Activated CD8-positive, alpha-beta T cell treated with anti-CD3 and anti-CD28 coated beads for 36 hours (primary cell): ENCODE measurements at regions of chr12 and their contacts with region 1.

Region 1: DNA sequence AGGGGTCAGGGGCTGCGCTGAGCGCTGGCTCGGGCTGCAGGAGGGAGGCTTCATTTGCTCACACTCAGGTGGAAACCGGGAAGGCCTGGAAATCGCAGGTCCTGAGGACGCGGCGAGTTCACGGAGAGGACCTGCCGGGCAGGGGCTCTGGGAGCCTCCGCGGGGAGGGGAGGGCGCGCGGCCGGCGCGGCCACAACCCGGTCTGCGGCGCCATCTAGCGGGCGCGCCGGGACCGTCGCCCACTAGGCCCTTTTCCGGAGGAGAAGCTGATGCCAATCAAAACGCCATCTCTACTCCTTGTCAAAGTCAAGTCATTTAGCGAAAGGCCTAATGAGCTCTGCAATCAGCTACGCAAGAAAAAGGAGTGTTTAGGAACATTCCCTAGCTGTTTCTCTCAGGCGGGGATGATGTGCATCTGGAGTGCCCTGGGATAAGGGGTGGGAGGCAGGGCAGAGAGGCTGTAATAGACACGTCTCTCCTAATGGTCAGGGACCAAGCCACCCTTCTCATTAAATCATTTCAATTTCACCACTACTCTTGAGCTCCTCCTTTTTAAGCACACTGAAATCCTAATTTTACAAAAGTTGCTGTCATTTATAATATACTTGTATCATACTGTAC is 885.8 kb upstream of the TMEM132C start:
- DNase-seq: peak; percentile 38
- ATAC-seq: peak; percentile 62
- H3K4me3 Mint-ChIP-seq: no peak overlapping the region
- H3K27ac Mint-ChIP-seq: no peak overlapping the region
- H3K4me1 Mint-ChIP-seq: no peaks in the 10 kb centered on the region
- H3K27me3 Mint-ChIP-seq: no peaks in the 10 kb centered on the region
- CTCF ChIP-seq: peak; percentile 73

Region 2: DNA sequence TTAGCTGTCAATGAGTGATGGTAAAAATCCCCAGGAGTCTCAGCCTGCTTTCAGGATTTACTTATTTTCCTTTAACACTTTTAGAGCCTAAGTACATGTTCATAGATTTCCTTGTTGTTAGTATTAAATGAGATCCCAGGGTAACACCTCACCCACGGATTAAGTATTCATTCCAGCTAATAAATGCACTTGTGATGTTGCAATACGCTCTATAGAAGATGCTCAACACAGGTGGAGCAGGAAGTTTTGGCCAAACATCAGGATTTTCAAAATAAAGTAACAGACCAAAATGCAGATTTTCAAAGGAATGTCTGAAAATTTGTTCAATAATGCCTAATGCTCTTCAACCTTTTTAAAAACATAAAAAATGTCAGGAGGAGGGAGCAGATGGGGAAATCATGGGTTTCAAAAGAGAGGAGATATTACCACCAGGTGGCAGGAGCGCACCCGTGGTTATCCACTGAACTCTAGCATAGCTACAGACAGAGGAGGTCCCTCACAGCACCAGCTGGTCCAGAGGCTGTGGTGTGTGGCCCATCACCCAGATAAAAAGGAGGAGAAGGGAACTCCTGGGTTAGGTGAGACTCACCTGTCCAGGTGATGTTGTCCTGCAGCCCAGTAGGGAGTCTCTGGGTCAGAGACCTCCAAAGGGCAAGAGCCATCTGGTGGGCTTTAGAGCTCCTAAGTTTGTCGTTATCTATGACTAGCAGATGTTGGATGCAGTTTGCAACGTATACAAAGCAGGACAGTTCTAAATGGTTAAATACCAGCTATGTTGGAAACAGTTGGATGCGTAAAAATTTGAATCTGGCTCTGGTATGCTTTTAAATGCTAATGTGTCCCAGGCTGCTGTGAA is 272.6 kb before region 1 on chr12:
- CTCF ChIA-PET with region 1: interaction called, 13 read pairs
- POLR2A ChIA-PET with region 1: no interaction called
- intact Hi-C with region 1: loop called (anchors 5 kb)
- DNase-seq: peak; percentile 56
- ATAC-seq: peak; percentile 53
- H3K4me3 Mint-ChIP-seq: no peak overlapping the region
- H3K27ac Mint-ChIP-seq: no peak overlapping the region
- H3K4me1 Mint-ChIP-seq: no peaks in the 10 kb centered on the region
- H3K27me3 Mint-ChIP-seq: peaks cover 13% of the 10 kb centered on the region
- CTCF ChIP-seq: peak; percentile 47